ENCODE measurements at regions of chr3 and their contacts with region 1.

Region 1: DNA sequence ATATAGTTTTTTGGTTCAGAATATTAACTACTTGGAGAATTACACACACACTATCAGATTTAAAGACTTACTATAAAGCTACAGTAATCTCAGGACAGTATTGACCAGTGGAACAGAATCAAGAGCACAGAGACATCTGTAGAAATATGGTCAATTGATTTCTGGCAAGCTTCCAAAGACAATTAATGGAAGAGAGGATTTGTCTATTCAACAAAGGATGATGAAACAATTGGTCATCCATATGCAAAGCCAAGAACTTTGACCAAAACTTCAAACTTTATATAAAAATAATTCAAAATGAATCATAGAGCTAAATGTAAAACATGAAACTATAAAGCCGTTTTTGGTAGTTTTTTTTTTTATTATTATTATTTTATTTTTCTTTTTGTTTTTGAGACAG is 29.8 kb upstream of the MB21D2 start:
- DNase-seq: no peak
- CTCF ChIP-seq: no peak

Region 2: DNA sequence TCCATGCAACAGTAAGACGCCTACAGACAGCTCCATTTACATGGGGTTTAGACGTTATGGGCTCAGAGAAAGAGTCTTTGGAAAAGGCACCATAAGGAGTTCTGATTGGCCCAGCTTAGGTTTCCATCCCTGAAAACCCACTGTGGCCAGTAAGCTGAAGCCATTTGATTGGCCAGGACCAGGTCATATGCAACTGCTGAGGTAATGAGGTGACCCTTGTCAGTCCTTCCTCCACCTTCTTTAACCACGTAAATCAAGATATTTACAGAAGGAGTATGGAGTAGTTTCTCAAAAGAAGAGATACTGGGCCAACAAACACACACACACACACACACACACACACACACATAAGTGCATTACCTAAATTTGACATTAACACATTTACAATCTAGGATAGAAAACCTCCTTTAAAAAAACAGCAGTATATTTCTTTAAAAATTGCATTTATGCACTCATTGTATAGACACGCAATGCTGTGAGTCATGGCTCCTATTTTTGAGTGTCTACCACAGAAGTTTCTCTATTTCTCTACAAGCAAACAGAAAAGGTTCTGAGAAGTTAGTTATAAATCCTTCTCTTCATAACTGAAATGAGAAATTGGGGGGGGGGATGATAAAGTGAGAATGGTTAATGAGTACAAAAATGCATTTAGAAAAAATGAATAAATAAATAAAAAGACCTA is 13.5 kb before region 1 on chr3:
- CTCF ChIA-PET with region 1: interaction called, 14 read pairs
- POLR2A ChIA-PET with region 1: no interaction called
- DNase-seq: no peak
- CTCF ChIP-seq: no peak

Measured in GM10248 (cell line).